Activated B cell treated with CpG ODN at 0.5 μM for 24 hours (primary cell): ENCODE measurements at regions of chr1 and their contacts with region 1.

Region 1: DNA sequence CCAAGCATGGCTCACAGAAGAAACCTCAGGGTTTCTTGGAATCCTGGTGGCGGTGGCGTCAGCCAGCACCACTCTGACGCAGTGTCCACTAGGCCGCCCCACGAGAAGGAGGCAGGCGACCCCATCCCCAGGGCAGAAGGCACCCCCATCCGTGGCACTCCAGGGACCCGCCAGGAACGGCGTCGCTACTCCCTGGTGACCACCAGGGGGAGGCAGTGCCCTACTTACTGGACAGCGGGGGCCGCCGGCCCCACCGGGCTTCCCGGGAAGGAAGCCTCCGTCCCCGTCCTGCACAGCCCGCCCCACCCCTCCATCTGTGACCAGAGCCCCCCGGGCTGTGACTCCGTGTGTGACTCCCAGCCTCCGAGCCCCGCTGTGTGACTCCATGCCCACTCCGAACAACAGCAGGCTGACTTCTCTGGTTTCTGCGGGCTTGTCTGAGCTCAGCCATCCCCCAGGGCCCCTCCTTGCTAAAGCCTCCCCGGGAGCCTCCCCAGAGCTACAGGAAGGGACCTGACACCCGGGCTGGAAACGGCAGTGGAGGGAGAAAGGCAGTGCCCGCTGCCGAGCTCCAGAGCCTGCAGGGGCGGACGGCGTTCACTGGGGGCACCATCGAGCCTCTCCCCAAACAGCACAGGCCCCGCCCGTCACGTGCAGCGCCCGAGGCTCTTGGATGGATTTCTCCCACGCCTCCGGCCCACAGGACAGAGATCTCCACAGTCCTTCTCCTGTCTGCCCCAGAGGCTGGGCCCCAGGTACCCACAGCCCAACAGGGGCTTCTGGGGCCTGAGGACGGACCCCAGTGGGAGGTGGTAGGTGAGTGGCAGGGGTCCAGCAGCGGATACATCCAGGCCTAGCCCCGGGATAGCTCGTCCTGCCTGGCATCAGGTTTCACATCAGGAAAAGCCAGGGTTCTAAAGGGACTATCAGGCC is 21.1 kb downstream of the KIF17 start:
- DNase-seq: peak; percentile 67
- ATAC-seq: peak; percentile 95
- H3K4me3 Mint-ChIP-seq: peak overlapping the region; percentile 87
- H3K27ac Mint-ChIP-seq: no peak overlapping the region
- H3K4me1 Mint-ChIP-seq: peaks cover 4% of the 10 kb centered on the region
- H3K27me3 Mint-ChIP-seq: no peaks in the 10 kb centered on the region
- CTCF ChIP-seq: peak; percentile 72

Region 2: GRCh38 chr1:20767271-20767670 is 70.6 kb after region 1 on chr1:
- CTCF ChIA-PET with region 1: no interaction called
- POLR2A ChIA-PET with region 1: no interaction called
- intact Hi-C with region 1: no loop called
- DNase-seq: no peak
- ATAC-seq: no peak
- H3K4me3 Mint-ChIP-seq: no peak overlapping the region
- H3K27ac Mint-ChIP-seq: no peak overlapping the region
- H3K4me1 Mint-ChIP-seq: no peaks in the 10 kb centered on the region
- H3K27me3 Mint-ChIP-seq: no peaks in the 10 kb centered on the region
- CTCF ChIP-seq: no peak

Region 3: GRCh38 chr1:20850021-20850420 is 153.4 kb after region 1 on chr1:
- CTCF ChIA-PET with region 1: no interaction called
- POLR2A ChIA-PET with region 1: no interaction called
- intact Hi-C with region 1: loop called (anchors 10 kb)
- DNase-seq: no peak
- ATAC-seq: no peak
- H3K4me3 Mint-ChIP-seq: no peak overlapping the region
- H3K27ac Mint-ChIP-seq: no peak overlapping the region
- H3K4me1 Mint-ChIP-seq: no peaks in the 10 kb centered on the region
- H3K27me3 Mint-ChIP-seq: no peaks in the 10 kb centered on the region
- CTCF ChIP-seq: no peak

Region 4: DNA sequence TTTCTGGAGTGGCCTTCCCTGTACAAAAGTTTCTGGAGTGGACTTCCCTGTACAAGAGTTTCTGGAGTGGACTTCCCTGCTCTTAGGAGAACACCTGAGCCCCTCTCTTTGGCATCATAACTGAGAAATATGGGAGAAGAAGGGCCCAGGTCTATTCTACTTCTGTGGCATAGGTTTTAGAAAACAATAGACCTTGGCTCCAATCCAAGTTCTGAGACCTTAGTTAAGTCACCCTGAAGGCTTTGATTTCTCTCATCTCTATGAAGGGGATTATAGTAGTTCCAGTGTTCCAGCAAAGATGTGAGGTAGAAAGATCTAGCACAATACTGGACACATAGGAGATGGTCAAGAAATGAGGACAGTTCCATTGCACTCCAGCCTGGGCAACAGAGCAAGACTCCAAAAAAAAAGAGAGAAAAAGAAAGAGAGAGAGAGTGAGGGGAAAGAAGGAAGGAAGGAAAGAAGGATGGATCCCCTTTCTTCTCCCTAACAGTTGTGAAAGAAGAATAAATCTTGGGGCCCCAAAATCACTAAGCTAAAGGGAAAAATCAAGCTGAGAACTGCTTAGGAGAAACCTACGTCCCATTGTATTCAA is 493.3 kb after region 1 on chr1:
- CTCF ChIA-PET with region 1: interaction called, 66 read pairs
- POLR2A ChIA-PET with region 1: no interaction called
- intact Hi-C with region 1: loop called (anchors 1 kb)
- DNase-seq: no peak
- ATAC-seq: no peak
- H3K4me3 Mint-ChIP-seq: no peak overlapping the region
- H3K27ac Mint-ChIP-seq: no peak overlapping the region
- H3K4me1 Mint-ChIP-seq: peaks cover 5% of the 10 kb centered on the region
- H3K27me3 Mint-ChIP-seq: peaks cover 5% of the 10 kb centered on the region
- CTCF ChIP-seq: no peak